ENCODE measurements at regions of chr3 and their contacts with region 1.

Region 1: GRCh38 chr3:134832585-134832984 is 37.5 kb downstream of the EPHB1 start:
- DNase-seq: no peak
- H3K4me3 ChIP-seq: no peak overlapping the region
- H3K27ac ChIP-seq: no peak overlapping the region
- H3K4me1 ChIP-seq: no peaks in the 10 kb centered on the region
- H3K27me3 ChIP-seq: no peaks in the 10 kb centered on the region
- CTCF ChIP-seq: no peak

Region 2: DNA sequence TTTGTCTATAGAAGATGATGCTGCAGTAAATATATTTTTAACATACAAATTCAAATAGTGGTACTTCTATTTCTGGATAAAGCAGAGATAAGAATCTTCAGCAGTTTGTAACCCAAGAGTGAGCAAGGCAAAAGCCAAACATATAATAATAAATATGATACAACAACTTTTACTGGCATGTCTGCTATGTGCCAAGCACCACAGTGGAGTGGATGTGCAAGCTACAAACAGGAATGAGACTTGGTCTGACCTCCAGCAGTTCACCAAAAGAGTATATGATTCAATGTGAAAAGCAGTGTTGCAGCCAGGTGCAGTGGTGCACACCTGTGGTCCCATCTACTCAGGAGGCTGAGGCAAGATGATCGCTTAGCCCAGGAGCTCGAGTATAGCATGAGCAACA is 358.1 kb after region 1 on chr3:
- CTCF ChIA-PET with region 1: interaction called, 12 read pairs
- dilution Hi-C with region 1: no loop called
- in situ Hi-C with region 1: no loop called
- intact Hi-C with region 1: no loop called
- DNase-seq: no peak
- H3K4me3 ChIP-seq: no peak overlapping the region
- H3K27ac ChIP-seq: no peak overlapping the region
- H3K4me1 ChIP-seq: no peaks in the 10 kb centered on the region
- H3K27me3 ChIP-seq: no peaks in the 10 kb centered on the region
- CTCF ChIP-seq: no peak

Region 3: DNA sequence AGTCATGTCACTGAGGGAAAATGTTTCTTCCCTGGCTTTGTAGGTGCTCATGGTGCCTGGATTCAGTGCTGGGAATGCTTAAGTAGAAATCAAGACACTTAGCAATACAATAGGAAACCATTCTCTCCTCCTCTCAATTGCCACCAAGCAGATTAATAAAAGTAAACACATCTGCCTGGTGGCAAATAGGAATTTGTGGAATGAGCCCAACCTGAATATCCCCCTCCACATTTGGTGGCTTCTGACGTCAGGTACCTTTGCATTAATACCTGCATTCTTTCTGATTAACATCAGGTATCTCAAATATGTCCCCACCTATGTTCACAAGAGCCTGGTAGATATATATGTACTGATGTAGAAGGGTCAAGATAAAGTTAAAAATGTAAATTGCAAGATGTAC is 1175.6 kb after region 1 on chr3:
- CTCF ChIA-PET with region 1: no interaction called
- dilution Hi-C with region 1: no loop called
- in situ Hi-C with region 1: no loop called
- intact Hi-C with region 1: no loop called
- DNase-seq: no peak
- H3K4me3 ChIP-seq: no peak overlapping the region
- H3K27ac ChIP-seq: no peak overlapping the region
- H3K4me1 ChIP-seq: peaks cover 9% of the 10 kb centered on the region
- H3K27me3 ChIP-seq: no peaks in the 10 kb centered on the region
- CTCF ChIP-seq: no peak